ENCODE measurements at regions of chr13 and their contacts with region 1.

Region 1: GRCh38 chr13:36282818-36283445 is 14.7 kb downstream of the CCDC169 start:
- DNase-seq: no peak
- H3K4me3 Mint-ChIP-seq: no peak overlapping the region
- H3K27ac Mint-ChIP-seq: no peak overlapping the region
- H3K4me1 Mint-ChIP-seq: no peaks in the 10 kb centered on the region
- H3K27me3 Mint-ChIP-seq: peaks cover 14% of the 10 kb centered on the region

Region 2: GRCh38 chr13:35978603-35979316 is 304.2 kb before region 1 on chr13:
- intact Hi-C with region 1: loop called (anchors 2 kb)
- DNase-seq: no peak
- H3K4me3 Mint-ChIP-seq: no peak overlapping the region
- H3K27ac Mint-ChIP-seq: no peak overlapping the region
- H3K4me1 Mint-ChIP-seq: no peaks in the 10 kb centered on the region
- H3K27me3 Mint-ChIP-seq: no peaks in the 10 kb centered on the region

Region 3: DNA sequence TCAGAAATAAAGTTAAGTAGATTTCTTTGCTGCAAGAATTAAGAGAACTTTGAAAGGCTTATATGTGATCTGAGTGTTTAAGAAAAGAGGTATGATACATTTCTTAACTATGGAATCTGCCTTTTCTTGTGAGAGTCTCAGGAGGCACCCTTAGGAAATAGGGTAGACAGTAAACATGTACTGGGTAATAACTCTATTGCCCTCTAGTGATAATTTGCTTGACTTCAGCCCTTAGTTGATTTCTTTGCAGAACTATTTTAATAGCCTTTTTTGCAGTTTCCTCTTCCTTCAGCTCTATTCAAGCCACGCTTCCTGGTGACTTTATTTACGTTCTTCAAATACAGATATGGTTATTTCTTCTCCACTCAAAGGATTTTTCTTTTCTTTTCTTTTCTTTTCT is 112.3 kb after region 1 on chr13:
- intact Hi-C with region 1: loop called (anchors 5 kb)
- DNase-seq: no peak
- H3K4me3 Mint-ChIP-seq: no peak overlapping the region
- H3K27ac Mint-ChIP-seq: no peak overlapping the region
- H3K4me1 Mint-ChIP-seq: no peaks in the 10 kb centered on the region
- H3K27me3 Mint-ChIP-seq: peaks cover 2% of the 10 kb centered on the region

Region 4: GRCh38 chr13:36475468-36475867 is 192.5 kb after region 1 on chr13:
- intact Hi-C with region 1: loop called (anchors 1 kb)
- DNase-seq: no peak
- H3K4me3 Mint-ChIP-seq: no peak overlapping the region
- H3K27ac Mint-ChIP-seq: no peak overlapping the region
- H3K4me1 Mint-ChIP-seq: no peaks in the 10 kb centered on the region
- H3K27me3 Mint-ChIP-seq: peaks cover 13% of the 10 kb centered on the region

Region 5: DNA sequence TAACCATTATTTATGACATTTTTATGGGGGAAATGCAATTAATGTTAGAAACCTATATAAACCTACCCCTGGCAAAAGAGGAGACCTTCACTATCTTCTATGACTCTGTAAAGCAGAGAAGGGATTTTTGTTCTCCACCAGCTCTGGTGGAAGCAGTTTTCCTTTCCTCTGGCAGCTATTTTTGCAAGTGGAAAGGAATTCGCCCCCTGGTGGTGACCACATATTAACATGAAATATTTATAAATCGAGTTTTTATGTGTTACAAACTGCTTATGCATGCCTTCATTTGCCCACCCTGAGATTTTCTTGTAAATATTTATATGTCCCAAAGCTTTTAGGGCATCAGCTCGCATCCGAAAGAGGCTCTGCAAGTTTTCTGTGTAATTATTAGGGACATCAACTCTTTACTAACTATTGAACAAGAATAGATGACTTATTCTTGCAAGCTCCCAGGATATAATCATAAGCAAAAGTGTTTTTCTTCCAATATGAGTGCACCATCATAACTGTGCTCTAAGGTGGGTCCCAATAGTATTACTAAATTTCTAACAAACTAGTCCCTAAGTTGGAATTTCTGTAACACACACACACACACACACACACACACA is 453.3 kb after region 1 on chr13:
- intact Hi-C with region 1: loop called (anchors 1 kb)
- DNase-seq: no peak
- H3K4me3 Mint-ChIP-seq: no peak overlapping the region
- H3K27ac Mint-ChIP-seq: no peak overlapping the region
- H3K4me1 Mint-ChIP-seq: no peaks in the 10 kb centered on the region
- H3K27me3 Mint-ChIP-seq: peaks cover 4% of the 10 kb centered on the region

Region 6: DNA sequence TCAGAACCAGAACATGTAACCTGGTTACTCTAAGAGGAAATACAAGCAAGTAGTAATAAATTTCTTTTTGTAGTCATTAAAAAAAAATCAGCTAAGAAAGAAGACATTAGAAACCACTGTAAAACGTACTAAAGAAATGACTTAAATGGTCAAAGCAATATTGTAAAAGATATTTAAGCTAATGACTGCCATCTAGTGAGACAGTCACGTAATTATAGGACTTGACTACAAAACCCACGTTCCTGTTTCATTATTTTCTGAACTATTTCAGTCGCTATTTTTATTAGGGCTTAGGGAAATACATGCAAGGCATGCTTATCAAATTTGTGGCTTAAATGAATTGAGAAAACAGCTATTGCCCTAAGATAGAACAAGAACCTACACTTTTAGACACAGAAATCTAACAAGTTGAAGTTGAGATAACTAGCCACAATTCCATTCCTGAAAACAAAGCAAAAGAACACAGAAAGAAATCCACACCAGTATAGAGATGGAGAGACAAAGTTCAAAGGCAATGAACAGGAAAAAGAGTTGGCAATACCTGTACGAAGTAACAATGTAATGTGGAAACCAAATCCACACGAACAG is 698.3 kb after region 1 on chr13:
- intact Hi-C with region 1: loop called (anchors 5 kb)
- DNase-seq: no peak
- H3K4me3 Mint-ChIP-seq: no peak overlapping the region
- H3K27ac Mint-ChIP-seq: no peak overlapping the region
- H3K4me1 Mint-ChIP-seq: no peaks in the 10 kb centered on the region
- H3K27me3 Mint-ChIP-seq: no peaks in the 10 kb centered on the region